HepG2 (cell line): ENCODE measurements at regions of chrX and their contacts with region 1.

Region 1: DNA sequence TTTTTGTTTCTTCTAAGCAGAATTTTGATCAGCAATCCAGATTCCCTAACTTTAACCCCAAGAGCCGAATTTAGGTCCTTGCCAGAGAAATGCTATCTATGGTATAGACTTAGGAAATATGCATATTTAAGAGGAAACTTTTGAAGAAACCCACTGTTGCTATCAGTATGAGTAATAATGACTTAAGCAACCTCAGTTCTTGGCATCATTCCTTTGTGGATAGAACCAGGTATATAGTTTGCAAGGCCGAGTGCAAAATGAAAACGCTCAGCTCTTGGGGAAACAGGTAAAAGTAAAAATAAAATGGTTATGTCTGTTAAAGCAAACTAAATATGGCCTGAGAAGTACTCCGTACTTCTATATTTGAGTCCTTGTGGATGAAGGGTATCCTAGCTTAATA is 78.1 kb downstream of the ARSF start:
- DNase-seq: no peak
- ATAC-seq: no peak
- H3K4me3 ChIP-seq: no peak overlapping the region
- H3K27ac ChIP-seq: no peak overlapping the region
- H3K4me1 ChIP-seq: no peaks in the 10 kb centered on the region
- H3K27me3 ChIP-seq: no peaks in the 10 kb centered on the region
- CTCF ChIP-seq: no peak
- EP300 ChIP-seq: no peak
- POLR2A ChIP-seq: no peak
- RAD21 ChIP-seq: no peak

Region 2: GRCh38 chrX:2903366-2903765 is 216.0 kb before region 1 on chrX:
- CTCF ChIA-PET with region 1: no interaction called
- POLR2A ChIA-PET with region 1: no interaction called
- in situ Hi-C with region 1: no loop called
- intact Hi-C with region 1: no loop called
- DNase-seq: no peak
- ATAC-seq: no peak
- H3K4me3 ChIP-seq: no peak overlapping the region
- H3K27ac ChIP-seq: no peak overlapping the region
- H3K4me1 ChIP-seq: no peaks in the 10 kb centered on the region; the same call in 1 of the 2 replicates
- H3K27me3 ChIP-seq: no peaks in the 10 kb centered on the region
- CTCF ChIP-seq: peak; percentile 45
- EP300 ChIP-seq: no peak
- POLR2A ChIP-seq: no peak
- RAD21 ChIP-seq: no peak

Region 3: DNA sequence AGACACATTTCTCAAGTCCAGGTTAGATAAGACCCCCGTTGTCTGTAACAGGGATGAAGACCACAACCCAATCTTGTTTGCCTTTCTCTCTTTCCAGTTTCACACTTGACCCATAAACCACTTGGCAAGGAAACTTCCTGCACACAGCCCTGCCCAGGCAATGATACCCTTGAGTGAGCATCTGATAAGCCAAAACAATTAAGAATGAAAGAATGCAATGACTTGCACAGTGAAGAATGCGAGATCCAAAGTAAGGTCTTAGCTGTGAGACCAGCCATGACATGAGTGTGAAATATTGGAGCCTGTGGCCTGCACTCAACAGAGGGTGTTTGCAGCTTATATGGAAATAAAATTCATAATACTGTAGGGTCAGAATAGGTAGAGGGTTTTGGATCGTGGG is 265.0 kb after region 1 on chrX:
- CTCF ChIA-PET with region 1: no interaction called
- POLR2A ChIA-PET with region 1: no interaction called
- in situ Hi-C with region 1: no loop called
- intact Hi-C with region 1: no loop called
- DNase-seq: no peak
- ATAC-seq: no peak
- H3K4me3 ChIP-seq: no peak overlapping the region
- H3K27ac ChIP-seq: no peak overlapping the region
- H3K4me1 ChIP-seq: no peaks in the 10 kb centered on the region
- H3K27me3 ChIP-seq: no peaks in the 10 kb centered on the region
- CTCF ChIP-seq: no peak
- EP300 ChIP-seq: no peak
- POLR2A ChIP-seq: no peak
- RAD21 ChIP-seq: no peak

Region 4: DNA sequence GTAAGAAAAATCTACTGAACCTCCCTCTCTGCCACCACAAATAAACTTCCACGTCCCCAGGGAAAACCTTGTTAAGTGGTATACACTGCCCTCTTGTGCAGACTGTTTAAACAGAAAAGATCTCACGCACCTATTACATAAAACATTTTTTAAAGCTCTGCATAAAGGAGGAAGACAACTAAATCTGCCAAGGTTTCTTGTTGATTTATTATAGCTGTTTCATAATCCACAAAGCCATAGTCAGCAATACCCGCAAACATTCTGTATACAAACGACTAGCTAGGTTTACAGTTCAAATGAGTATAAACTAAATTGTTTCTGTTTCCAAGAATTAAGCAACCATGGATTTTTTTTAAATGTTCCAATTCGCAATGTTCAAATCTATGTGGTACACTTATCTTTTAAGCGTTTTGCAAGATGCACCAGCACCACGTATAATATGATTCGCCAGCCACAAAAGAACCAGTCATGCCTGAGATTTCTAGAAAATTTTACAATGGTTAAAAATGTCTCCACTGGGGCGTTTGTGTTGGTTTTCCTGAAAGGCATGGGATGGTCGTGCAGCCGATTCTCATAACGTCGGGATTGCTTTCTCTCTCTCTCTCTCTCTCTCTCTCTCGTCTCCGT is 429.5 kb after region 1 on chrX:
- CTCF ChIA-PET with region 1: no interaction called
- POLR2A ChIA-PET with region 1: no interaction called
- in situ Hi-C with region 1: no loop called
- intact Hi-C with region 1: loop called (anchors 5 kb)
- DNase-seq: peak; percentile 0
- ATAC-seq: no peak
- H3K4me3 ChIP-seq: no peak overlapping the region
- H3K27ac ChIP-seq: no peak overlapping the region
- H3K4me1 ChIP-seq: no peaks in the 10 kb centered on the region
- H3K27me3 ChIP-seq: no peaks in the 10 kb centered on the region
- CTCF ChIP-seq: peak; percentile 25; the same call in 1 of the 2 replicates
- EP300 ChIP-seq: no peak
- POLR2A ChIP-seq: no peak
- RAD21 ChIP-seq: no peak

Region 5: GRCh38 chrX:3771766-3772165 is 652.4 kb after region 1 on chrX:
- CTCF ChIA-PET with region 1: no interaction called
- POLR2A ChIA-PET with region 1: no interaction called
- in situ Hi-C with region 1: no loop called
- intact Hi-C with region 1: no loop called
- DNase-seq: no peak
- ATAC-seq: no peak
- H3K4me3 ChIP-seq: no peak overlapping the region
- H3K27ac ChIP-seq: no peak overlapping the region
- H3K4me1 ChIP-seq: no peaks in the 10 kb centered on the region
- H3K27me3 ChIP-seq: no peaks in the 10 kb centered on the region
- CTCF ChIP-seq: no peak
- EP300 ChIP-seq: no peak
- POLR2A ChIP-seq: no peak
- RAD21 ChIP-seq: no peak